T-cell (primary cell): ENCODE measurements at regions of chr11 and their contacts with region 1.

Region 1: GRCh38 chr11:118791111-118791965 is at the start of gene DDX6:
- DNase-seq: peak; percentile 84 to 95 (median 90)
- ATAC-seq: peak; percentile 69 to 76 (median 72)
- H3K4me3 ChIP-seq: peak within 1 kb of the TSS; percentile 97 to 99
- H3K4me3 Mint-ChIP-seq: peak within 1 kb of the TSS; percentile 97 to 99 (median 98)
- H3K27ac ChIP-seq: peak within 1 kb of the TSS; percentile 99
- H3K27ac Mint-ChIP-seq: peak within 1 kb of the TSS; percentile 98 to 99
- H3K4me1 ChIP-seq: peaks cover 17 to 35% of the 10 kb centered on the region in 2 experiments
- H3K4me1 Mint-ChIP-seq: peaks cover 23 to 40% (median 34%) of the 10 kb centered on the region in 3 donors
- H3K27me3 ChIP-seq: no peaks in the 10 kb centered on the region
- H3K27me3 Mint-ChIP-seq: no peaks in the 10 kb centered on the region
- total RNA-seq, gene DDX6: 220 to 312 (median 244) TPM

Region 2: DNA sequence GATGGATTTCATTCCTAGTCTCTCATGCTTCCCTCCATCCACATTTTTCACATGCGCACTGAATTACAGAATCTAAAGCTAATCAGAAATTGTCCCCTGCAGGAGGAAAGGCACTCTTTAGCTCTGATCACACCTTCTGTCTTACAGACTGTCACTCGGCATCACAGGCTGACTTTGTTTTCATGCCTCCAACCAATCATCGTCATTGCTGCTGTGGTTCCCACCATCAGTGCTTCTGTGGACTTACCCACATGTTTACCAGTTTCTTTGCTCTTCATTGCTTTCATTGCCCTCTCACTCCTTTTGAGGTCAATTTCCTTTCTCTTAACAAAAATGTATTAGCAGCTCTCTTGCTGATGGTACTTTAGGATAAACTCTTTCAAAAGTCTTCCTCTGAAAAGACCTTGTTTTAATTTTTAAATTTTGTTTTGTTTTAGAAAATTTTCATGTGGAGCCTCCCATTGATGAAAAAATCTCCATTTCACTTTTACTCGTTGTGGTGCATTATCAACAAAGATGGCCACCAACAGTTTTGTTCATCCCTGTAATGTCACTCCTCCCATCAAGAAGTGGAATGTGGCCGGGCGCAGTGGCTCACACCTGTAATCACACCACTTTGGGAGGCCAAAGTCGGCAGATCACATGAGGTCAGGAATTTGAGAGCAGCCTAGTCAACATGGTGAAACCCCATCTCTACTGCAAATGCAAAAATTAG is 91.7 kb before region 1 on chr11:
- CTCF ChIA-PET with region 1: interaction called in 1 of 2 experiments, 10 read pairs
- POLR2A ChIA-PET with region 1: interaction called, 3 to 8 read pairs
- DNase-seq: peak in 34 of 35 experiments; percentile 52 to 93 (median 78)
- ATAC-seq: peak; percentile 98 to 99 (median 98)
- H3K4me3 ChIP-seq: no peak overlapping the region
- H3K4me3 Mint-ChIP-seq: peak overlapping the region; percentile 50 to 69 (median 53)
- H3K27ac ChIP-seq: peak overlapping the region; percentile 83
- H3K27ac Mint-ChIP-seq: peak overlapping the region; percentile 95 to 98
- H3K4me1 ChIP-seq: peaks cover 17 to 89% of the 10 kb centered on the region in 2 experiments
- H3K4me1 Mint-ChIP-seq: peaks cover 66 to 74% (median 67%) of the 10 kb centered on the region in 3 donors
- H3K27me3 ChIP-seq: no peaks in the 10 kb centered on the region
- H3K27me3 Mint-ChIP-seq: no peaks in the 10 kb centered on the region

Region 3: GRCh38 chr11:118757876-118758399 is 33.4 kb before region 1 on chr11:
- CTCF ChIA-PET with region 1: interaction called in 1 of 2 experiments, 5 read pairs
- POLR2A ChIA-PET with region 1: interaction called, 4 to 12 read pairs
- DNase-seq: no peak
- ATAC-seq: no peak
- H3K4me3 ChIP-seq: no peak overlapping the region
- H3K4me3 Mint-ChIP-seq: no peak overlapping the region
- H3K27ac ChIP-seq: no peak overlapping the region
- H3K27ac Mint-ChIP-seq: peak overlapping the region; percentile 16 to 27
- H3K4me1 ChIP-seq: no peaks in the 10 kb centered on the region
- H3K4me1 Mint-ChIP-seq: peaks cover 7 to 8% (median 7%) of the 10 kb centered on the region in 3 donors
- H3K27me3 ChIP-seq: no peaks in the 10 kb centered on the region
- H3K27me3 Mint-ChIP-seq: no peaks in the 10 kb centered on the region

Region 4: DNA sequence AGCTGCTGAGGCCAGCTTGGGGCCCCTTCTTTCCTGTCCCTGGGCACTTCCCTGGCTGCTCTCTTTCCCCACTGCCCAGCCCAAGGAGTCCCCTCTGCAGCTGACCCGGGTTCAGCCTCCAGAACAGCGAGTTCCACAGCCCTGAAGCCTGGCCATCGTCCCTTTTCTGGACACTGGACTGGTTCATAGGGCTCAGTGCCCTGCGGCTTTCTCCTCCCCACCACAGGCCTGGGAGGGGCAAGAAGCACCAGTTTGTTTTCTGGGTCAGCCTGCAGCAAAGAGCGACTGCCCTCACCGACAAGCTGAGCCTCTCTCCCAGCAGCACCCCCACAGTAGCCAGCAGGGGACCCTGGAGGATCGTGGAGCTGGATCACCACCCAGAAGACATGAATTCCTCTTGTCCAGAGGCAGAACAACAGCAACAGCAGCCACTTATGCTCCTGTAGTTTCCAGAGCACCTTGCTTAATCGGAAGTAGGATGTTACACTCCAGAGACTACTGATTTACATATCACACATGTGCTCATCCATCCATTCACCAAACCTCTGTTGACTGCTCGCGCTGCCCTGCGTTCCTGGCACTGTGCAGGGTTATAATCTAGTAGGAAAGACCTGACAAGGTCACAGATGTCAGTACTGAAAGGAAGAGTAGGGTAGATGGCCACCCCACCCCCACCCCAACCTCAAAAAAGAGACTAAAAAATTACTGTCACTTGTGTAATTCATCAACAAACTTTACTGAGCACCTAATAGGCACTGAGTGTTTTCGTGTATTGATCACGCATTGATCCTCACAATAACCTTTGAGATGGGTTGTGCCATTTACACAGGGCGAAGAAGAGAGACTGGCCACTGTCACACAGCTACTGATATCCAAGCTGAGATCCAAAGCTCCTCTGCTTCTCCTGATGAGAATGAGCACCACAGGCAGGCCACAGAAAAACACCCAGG is 79.3 kb after region 1 on chr11:
- CTCF ChIA-PET with region 1: interaction called in 1 of 2 experiments, 34 read pairs
- POLR2A ChIA-PET with region 1: interaction called, 13 to 63 read pairs
- DNase-seq: peak in 11 of 35 experiments; percentile 14 to 62 (median 26)
- ATAC-seq: peak; percentile 36 to 60 (median 53)
- H3K4me3 ChIP-seq: peak overlapping the region; percentile 35 to 51
- H3K4me3 Mint-ChIP-seq: peak overlapping the region; percentile 69 to 86 (median 71)
- H3K27ac ChIP-seq: peak overlapping the region; percentile 100
- H3K27ac Mint-ChIP-seq: peak overlapping the region; percentile 95 to 98
- H3K4me1 ChIP-seq: peaks cover 29 to 67% of the 10 kb centered on the region in 2 experiments
- H3K4me1 Mint-ChIP-seq: peaks cover 58 to 64% (median 59%) of the 10 kb centered on the region in 3 donors
- H3K27me3 ChIP-seq: no peaks in the 10 kb centered on the region
- H3K27me3 Mint-ChIP-seq: no peaks in the 10 kb centered on the region

Region 5: DNA sequence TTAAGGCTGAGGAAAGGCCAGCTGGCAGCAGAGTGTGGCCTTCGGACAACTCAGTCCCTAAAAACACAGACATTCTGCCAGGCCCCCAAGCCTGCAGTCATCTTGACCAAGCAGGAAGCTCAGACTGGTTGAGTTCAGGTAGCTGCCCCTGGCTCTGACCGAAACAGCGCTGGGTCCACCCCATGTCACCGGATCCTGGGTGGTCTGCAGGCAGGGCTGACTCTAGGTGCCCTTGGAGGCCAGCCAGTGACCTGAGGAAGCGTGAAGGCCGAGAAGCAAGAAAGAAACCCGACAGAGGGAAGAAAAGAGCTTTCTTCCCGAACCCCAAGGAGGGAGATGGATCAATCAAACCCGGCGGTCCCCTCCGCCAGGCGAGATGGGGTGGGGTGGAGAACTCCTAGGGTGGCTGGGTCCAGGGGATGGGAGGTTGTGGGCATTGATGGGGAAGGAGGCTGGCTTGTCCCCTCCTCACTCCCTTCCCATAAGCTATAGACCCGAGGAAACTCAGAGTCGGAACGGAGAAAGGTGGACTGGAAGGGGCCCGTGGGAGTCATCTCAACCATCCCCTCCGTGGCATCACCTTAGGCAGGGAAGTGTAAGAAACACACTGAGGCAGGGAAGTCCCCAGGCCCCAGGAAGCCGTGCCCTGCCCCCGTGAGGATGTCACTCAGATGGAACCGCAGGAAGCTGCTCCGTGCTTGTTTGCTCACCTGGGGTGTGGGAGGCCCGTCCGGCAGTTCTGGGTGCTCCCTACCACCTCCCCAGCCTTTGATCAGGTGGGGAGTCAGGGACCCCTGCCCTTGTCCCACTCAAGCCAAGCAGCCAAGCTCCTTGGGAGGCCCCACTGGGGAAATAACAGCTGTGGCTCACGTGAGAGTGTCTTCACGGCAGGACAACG is 104.1 kb after region 1 on chr11:
- CTCF ChIA-PET with region 1: interaction called, 3 to 17 read pairs
- POLR2A ChIA-PET with region 1: interaction called, 6 to 10 read pairs
- DNase-seq: peak; percentile 58 to 90 (median 79)
- ATAC-seq: peak; percentile 60 to 78 (median 67)
- H3K4me3 ChIP-seq: peak overlapping the region; percentile 13 to 52
- H3K4me3 Mint-ChIP-seq: peak overlapping the region; percentile 66 to 88 (median 66)
- H3K27ac ChIP-seq: peak overlapping the region; percentile 92
- H3K27ac Mint-ChIP-seq: peak overlapping the region; percentile 97 to 99
- H3K4me1 ChIP-seq: peaks cover 40 to 99% of the 10 kb centered on the region in 2 experiments
- H3K4me1 Mint-ChIP-seq: peaks cover 78 to 83% (median 82%) of the 10 kb centered on the region in 3 donors
- H3K27me3 ChIP-seq: no peaks in the 10 kb centered on the region
- H3K27me3 Mint-ChIP-seq: no peaks in the 10 kb centered on the region